Common myeloid progenitor, CD34-positive (primary cell): ENCODE measurements at regions of chr20 and their contacts with region 1.

Region 1: GRCh38 chr20:50120897-50121693 is 8.1 kb upstream of the UBE2V1 start:
- DNase-seq: peak; percentile 78 to 90 (median 88)
- H3K4me3 ChIP-seq: no peak overlapping the region
- H3K27ac ChIP-seq: no peak overlapping the region
- H3K4me1 ChIP-seq: peaks cover under 1 to 14% (median 9%) of the 10 kb centered on the region in 4 experiments
- H3K27me3 ChIP-seq: no peaks in the 10 kb centered on the region

Region 2: DNA sequence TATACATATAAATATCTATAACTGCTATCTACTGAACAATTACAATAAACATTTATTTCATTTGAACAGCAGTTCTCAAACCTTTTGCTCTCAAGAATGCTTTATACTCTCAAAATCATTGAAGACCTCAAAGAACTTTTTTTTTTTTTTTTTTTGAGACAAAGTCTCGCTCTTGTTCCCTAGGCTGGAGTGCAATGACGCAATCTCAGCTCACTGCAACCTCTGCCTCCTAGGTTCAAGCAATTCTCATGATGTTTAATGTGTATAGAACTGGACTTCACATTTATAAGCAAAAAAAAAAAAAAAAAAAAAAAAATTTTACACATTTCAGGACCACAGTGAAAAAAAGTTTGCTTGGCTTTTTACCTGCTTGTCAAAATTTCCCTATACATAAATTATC is 19.8 kb before region 1 on chr20:
- CTCF ChIA-PET with region 1: interaction called, 49 read pairs
- POLR2A ChIA-PET with region 1: no interaction called
- DNase-seq: no peak
- H3K4me3 ChIP-seq: no peak overlapping the region
- H3K27ac ChIP-seq: no peak overlapping the region
- H3K4me1 ChIP-seq: peaks cover 0 to 4% (median 3%) of the 10 kb centered on the region in 4 experiments
- H3K27me3 ChIP-seq: no peaks in the 10 kb centered on the region

Region 3: GRCh38 chr20:50133474-50134217 is 12.6 kb after region 1 on chr20:
- CTCF ChIA-PET with region 1: interaction called, 24 read pairs
- POLR2A ChIA-PET with region 1: interaction called, 3 read pairs
- DNase-seq: no peak
- H3K4me3 ChIP-seq: no peak overlapping the region
- H3K27ac ChIP-seq: no peak overlapping the region
- H3K4me1 ChIP-seq: no peaks in the 10 kb centered on the region
- H3K27me3 ChIP-seq: no peaks in the 10 kb centered on the region

Region 4: GRCh38 chr20:50146732-50147662 is 25.9 kb after region 1 on chr20:
- CTCF ChIA-PET with region 1: interaction called, 41 read pairs
- POLR2A ChIA-PET with region 1: no interaction called
- DNase-seq: peak; percentile 73 to 93 (median 86)
- H3K4me3 ChIP-seq: peak overlapping the region in 3 of 7 experiments; percentile 19 to 33 (median 20)
- H3K27ac ChIP-seq: peak overlapping the region; percentile 71 to 82
- H3K4me1 ChIP-seq: peaks cover 3 to 32% (median 29%) of the 10 kb centered on the region in 4 experiments
- H3K27me3 ChIP-seq: no peaks in the 10 kb centered on the region

Region 5: GRCh38 chr20:50189681-50190582 is 68.8 kb after region 1 on chr20:
- CTCF ChIA-PET with region 1: interaction called, 183 read pairs
- POLR2A ChIA-PET with region 1: no interaction called
- DNase-seq: peak; percentile 83 to 91 (median 90)
- H3K4me3 ChIP-seq: peak overlapping the region in 6 of 7 experiments; percentile 79 to 91 (median 86)
- H3K27ac ChIP-seq: peak overlapping the region; percentile 61 to 91
- H3K4me1 ChIP-seq: peaks cover 2 to 48% (median 38%) of the 10 kb centered on the region in 4 experiments
- H3K27me3 ChIP-seq: no peaks in the 10 kb centered on the region

Region 6: DNA sequence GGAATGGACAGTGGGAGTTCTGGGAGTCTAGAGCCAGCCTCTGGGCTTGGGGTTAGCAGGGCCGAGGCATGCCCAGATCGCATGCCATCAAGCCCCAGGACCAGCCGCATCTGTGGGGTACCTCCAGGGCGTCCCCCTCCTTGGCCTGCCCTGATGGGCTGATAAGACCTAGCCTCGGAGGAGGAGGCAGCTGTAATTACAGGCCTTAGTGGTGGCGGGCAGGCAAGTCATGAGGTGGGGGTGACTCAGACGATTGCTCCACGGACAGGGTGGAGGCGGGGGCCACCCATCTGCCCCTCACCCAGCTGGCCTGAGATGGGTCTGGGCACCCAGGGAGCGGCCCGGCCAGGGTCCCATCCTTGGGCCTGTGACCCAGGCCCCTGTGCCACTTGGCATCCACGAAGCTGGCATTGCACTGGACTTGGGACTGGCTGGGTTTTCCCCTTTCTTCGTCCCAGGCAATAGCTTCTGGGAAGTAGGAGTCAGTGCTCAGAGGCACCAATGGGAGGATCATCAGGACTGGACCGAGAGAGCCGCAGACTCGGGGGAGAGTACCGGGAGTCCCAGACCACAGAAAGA is 127.1 kb after region 1 on chr20:
- CTCF ChIA-PET with region 1: no interaction called
- POLR2A ChIA-PET with region 1: no interaction called
- DNase-seq: no peak
- H3K4me3 ChIP-seq: no peak overlapping the region
- H3K27ac ChIP-seq: no peak overlapping the region
- H3K4me1 ChIP-seq: peaks cover 0 to 12% (median 2%) of the 10 kb centered on the region in 4 experiments
- H3K27me3 ChIP-seq: no peaks in the 10 kb centered on the region